Naive thymus-derived CD4-positive, alpha-beta T cell (primary cell): ENCODE measurements at regions of chr2 and their contacts with region 1.

Region 1: GRCh38 chr2:152036611-152037469 is 62.0 kb downstream of the CACNB4 start:
- DNase-seq: peak; percentile 5 to 51 (median 32)
- ATAC-seq: peak; percentile 74
- H3K4me3 ChIP-seq: no peak overlapping the region
- H3K4me3 Mint-ChIP-seq: no peak overlapping the region
- H3K27ac ChIP-seq: no peak overlapping the region
- H3K27ac Mint-ChIP-seq: no peak overlapping the region
- H3K4me1 ChIP-seq: no peaks in the 10 kb centered on the region
- H3K4me1 Mint-ChIP-seq: no peaks in the 10 kb centered on the region
- H3K27me3 ChIP-seq: no peaks in the 10 kb centered on the region
- H3K27me3 Mint-ChIP-seq: peaks cover 0 to 4% (median 0%) of the 10 kb centered on the region in 5 donors

Region 2: GRCh38 chr2:152432206-152432653 is 395.4 kb after region 1 on chr2:
- CTCF ChIA-PET with region 1: no interaction called
- POLR2A ChIA-PET with region 1: no interaction called
- intact Hi-C with region 1: loop called in 1 of 2 experiments (anchors 10 kb)
- DNase-seq: no peak
- ATAC-seq: peak; percentile 66
- H3K4me3 ChIP-seq: no peak overlapping the region
- H3K4me3 Mint-ChIP-seq: no peak overlapping the region
- H3K27ac ChIP-seq: no peak overlapping the region
- H3K27ac Mint-ChIP-seq: no peak overlapping the region
- H3K4me1 ChIP-seq: no peaks in the 10 kb centered on the region
- H3K4me1 Mint-ChIP-seq: no peaks in the 10 kb centered on the region
- H3K27me3 ChIP-seq: no peaks in the 10 kb centered on the region
- H3K27me3 Mint-ChIP-seq: peaks cover 0 to 13% (median 6%) of the 10 kb centered on the region in 5 donors

Region 3: DNA sequence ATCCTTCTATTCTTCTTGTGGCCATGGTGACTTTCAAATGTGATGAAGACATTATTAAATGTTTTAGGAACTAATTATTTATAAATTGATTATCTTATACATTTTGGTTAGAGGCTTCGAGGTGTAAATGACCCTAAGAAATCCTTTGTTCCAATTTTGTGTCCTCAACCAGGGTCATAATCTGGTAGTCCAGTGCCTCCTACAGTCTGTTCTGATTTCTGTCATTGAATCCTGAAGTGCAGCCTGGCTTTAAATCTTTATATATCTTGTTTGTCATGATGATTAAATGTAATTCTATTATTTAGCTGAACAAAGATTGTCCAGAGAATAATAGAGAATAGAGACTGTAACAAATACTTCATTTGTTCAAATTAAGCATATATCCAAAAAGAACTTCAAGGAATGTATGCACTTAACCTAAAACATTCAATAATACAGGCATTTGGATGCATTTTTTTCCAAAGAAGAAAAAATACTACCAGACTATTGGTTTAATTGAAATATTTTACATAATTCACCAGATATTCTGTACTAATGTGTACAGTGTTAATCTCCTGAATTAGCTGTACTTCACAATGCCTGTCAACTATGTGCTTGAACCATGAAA is 590.6 kb after region 1 on chr2:
- CTCF ChIA-PET with region 1: no interaction called
- POLR2A ChIA-PET with region 1: no interaction called
- intact Hi-C with region 1: loop called in 1 of 2 experiments (anchors 2 kb)
- DNase-seq: no peak
- ATAC-seq: no peak
- H3K4me3 ChIP-seq: no peak overlapping the region
- H3K4me3 Mint-ChIP-seq: no peak overlapping the region
- H3K27ac ChIP-seq: no peak overlapping the region
- H3K27ac Mint-ChIP-seq: no peak overlapping the region
- H3K4me1 ChIP-seq: no peaks in the 10 kb centered on the region
- H3K4me1 Mint-ChIP-seq: peaks cover 0 to 16% (median 0%) of the 10 kb centered on the region in 7 donors
- H3K27me3 ChIP-seq: no peaks in the 10 kb centered on the region
- H3K27me3 Mint-ChIP-seq: peaks cover 0 to 15% (median 0%) of the 10 kb centered on the region in 5 donors

Region 4: DNA sequence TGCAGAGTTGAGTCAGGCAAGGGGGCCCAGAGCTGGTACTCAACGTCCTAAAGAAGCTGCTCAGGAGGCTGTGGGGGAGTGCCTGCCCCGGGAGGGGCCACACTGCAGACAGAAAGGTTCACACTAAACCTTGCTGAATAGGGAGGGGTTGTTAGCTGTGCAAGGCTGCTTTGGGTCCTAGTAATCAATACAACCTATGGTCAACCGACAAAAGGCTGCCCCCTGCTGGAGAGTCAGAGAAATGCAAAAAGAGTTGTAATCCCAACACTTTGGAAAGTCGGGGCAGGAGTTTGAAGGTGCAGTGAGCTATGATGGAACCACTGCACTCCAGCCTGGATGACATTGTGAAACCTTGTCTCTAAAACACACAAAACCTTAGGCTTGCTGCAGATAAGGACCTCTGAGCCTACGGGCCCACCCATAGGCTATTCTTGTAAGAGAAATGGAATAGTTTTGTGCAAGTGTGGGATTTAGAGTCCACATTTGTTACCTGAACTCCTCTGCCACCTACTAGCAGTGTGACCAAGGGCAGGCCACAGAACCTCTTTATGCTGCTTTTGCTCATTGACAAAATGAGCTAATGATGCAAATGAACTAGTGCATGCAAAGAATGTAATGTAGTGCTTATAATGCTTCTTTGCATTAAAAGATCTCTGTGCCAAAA is 598.9 kb after region 1 on chr2:
- CTCF ChIA-PET with region 1: interaction called, 7 read pairs
- POLR2A ChIA-PET with region 1: no interaction called
- intact Hi-C with region 1: loop called (anchors 1 kb)
- DNase-seq: peak; percentile 14 to 71 (median 49)
- ATAC-seq: peak; percentile 67
- H3K4me3 ChIP-seq: no peak overlapping the region
- H3K4me3 Mint-ChIP-seq: no peak overlapping the region
- H3K27ac ChIP-seq: no peak overlapping the region
- H3K27ac Mint-ChIP-seq: no peak overlapping the region
- H3K4me1 ChIP-seq: no peaks in the 10 kb centered on the region
- H3K4me1 Mint-ChIP-seq: no peaks in the 10 kb centered on the region
- H3K27me3 ChIP-seq: no peaks in the 10 kb centered on the region
- H3K27me3 Mint-ChIP-seq: peaks cover 0 to 4% (median 0%) of the 10 kb centered on the region in 5 donors

Region 5: DNA sequence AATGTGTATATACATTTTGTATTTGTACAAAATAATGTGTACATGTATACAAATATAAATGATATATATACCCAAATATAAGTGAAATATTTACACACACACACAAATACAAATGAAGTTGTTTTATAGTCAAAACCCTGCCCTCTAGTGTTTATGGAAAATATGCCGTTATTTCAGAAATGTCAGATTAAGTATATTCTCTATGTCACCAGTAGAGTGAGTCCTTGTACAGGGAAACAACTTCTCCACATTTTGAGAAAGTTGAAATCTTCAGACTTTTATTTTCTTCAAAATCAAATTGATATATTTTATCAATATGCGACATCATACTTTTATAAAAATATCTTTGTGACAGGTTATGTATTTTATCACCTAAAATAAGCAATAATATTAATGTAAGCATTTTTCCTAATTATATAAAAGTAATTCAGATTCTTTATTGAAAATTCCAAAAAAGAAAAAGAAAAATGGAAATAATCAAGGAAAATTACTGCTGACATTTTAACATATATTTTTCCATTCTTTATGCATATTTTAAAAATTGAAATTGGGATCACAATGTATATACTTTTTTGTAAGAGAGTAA is 704.0 kb after region 1 on chr2:
- CTCF ChIA-PET with region 1: no interaction called
- POLR2A ChIA-PET with region 1: no interaction called
- intact Hi-C with region 1: loop called (anchors 1 to 2 kb)
- DNase-seq: peak in 7 of 9 donors; percentile 13 to 53 (median 51)
- ATAC-seq: peak; percentile 93
- H3K4me3 ChIP-seq: no peak overlapping the region
- H3K4me3 Mint-ChIP-seq: no peak overlapping the region
- H3K27ac ChIP-seq: no peak overlapping the region
- H3K27ac Mint-ChIP-seq: no peak overlapping the region
- H3K4me1 ChIP-seq: no peaks in the 10 kb centered on the region
- H3K4me1 Mint-ChIP-seq: peaks cover 0 to 9% (median 3%) of the 10 kb centered on the region in 7 donors
- H3K27me3 ChIP-seq: no peaks in the 10 kb centered on the region
- H3K27me3 Mint-ChIP-seq: no peaks in the 10 kb centered on the region

Region 6: DNA sequence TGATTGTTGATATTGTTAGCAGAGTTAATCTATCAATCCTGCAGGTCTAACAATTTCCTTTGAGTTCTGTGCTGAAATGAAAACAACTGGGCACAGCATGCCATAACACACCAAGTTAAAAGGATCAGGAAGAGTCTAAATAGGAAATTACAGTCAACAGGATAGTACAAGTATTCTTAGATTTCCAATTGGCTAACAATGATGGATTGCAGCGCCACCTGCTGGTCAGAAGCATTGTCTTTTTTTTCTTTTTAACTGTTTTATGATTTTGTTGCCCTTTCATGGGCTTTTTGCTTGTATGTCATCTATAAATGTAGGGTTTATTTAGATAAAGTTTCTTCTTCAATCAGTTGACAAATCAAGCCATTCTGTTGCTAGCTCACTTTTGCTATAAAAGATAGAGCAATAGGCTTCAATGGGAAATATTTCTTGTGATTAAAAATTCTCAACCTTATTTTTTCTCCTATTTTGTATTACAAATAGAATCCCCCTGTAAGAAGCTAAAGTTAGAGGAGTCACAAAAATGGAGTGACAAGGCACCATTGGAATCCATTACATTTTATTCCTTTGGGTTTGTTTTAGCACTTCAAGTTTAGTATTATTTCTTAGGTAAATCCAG is 1482.5 kb after region 1 on chr2:
- CTCF ChIA-PET with region 1: no interaction called
- POLR2A ChIA-PET with region 1: no interaction called
- intact Hi-C with region 1: loop called in 1 of 2 experiments (anchors 1 kb)
- DNase-seq: peak in 6 of 9 donors; percentile 12 to 40 (median 17)
- ATAC-seq: peak; percentile 31
- H3K4me3 ChIP-seq: no peak overlapping the region
- H3K4me3 Mint-ChIP-seq: no peak overlapping the region
- H3K27ac ChIP-seq: no peak overlapping the region
- H3K27ac Mint-ChIP-seq: no peak overlapping the region
- H3K4me1 ChIP-seq: no peaks in the 10 kb centered on the region
- H3K4me1 Mint-ChIP-seq: no peaks in the 10 kb centered on the region
- H3K27me3 ChIP-seq: no peaks in the 10 kb centered on the region
- H3K27me3 Mint-ChIP-seq: peaks cover 0 to 25% (median 8%) of the 10 kb centered on the region in 5 donors